ENCODE measurements at regions of chr17 and their contacts with region 1.

Region 1: GRCh38 chr17:49763735-49764558 is at the start of gene FAM117A:
- H3K4me3 ChIP-seq: peak within 1 kb of the TSS; percentile 73
- H3K27ac ChIP-seq: no peak within 1 kb of the TSS
- H3K4me1 ChIP-seq: peaks cover 9% of the 10 kb centered on the region; the same call in 1 of the 2 replicates
- CTCF ChIP-seq: no peak

Region 2: GRCh38 chr17:49646391-49647255 is 117.3 kb before region 1 on chr17:
- CTCF ChIA-PET with region 1: no interaction called
- POLR2A ChIA-PET with region 1: interaction called, 12 read pairs
- H3K4me3 ChIP-seq: no peak overlapping the region
- H3K27ac ChIP-seq: peak overlapping the region; percentile 39
- H3K4me1 ChIP-seq: peaks cover 8% of the 10 kb centered on the region
- CTCF ChIP-seq: no peak

Region 3: DNA sequence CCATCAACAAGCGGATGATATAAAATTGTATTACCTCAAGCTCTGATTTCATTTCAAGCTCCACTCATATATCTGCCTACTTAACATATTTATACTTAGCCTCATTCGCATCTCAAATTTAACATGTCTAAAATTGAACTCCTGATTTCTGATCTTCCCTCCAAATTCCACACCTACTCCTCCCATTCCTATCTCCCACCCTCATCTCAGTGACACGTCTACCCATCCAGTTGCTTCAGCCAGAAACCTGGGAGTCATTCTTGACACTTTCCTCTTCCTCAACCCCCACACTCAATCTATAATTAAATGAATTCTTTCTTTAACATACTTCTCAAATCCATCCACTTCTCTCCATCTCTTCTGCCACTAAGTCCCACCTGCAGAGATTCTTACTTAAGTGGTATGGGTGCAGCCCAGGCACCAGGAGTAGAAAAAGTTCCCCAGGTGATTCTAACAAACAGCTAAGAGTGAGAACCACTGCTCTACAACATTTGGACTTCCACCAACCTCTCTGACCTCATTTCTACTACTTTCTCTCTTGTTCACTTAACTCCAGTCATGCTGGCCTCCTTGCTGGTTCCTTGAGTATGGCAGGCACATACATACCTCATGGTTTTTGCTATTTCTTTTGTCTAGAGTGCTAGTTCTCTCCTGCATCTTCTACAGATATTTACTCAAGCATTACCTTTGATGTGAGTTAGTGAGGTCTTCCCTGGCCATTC is 104.1 kb before region 1 on chr17:
- CTCF ChIA-PET with region 1: no interaction called
- POLR2A ChIA-PET with region 1: no interaction called
- H3K4me3 ChIP-seq: no peak overlapping the region
- H3K27ac ChIP-seq: no peak overlapping the region
- H3K4me1 ChIP-seq: peaks cover 10% of the 10 kb centered on the region
- CTCF ChIP-seq: no peak

Region 4: GRCh38 chr17:49707608-49708514 is 56.1 kb before region 1 on chr17 and contains the start of gene SLC35B1:
- CTCF ChIA-PET with region 1: interaction called, 11 read pairs
- POLR2A ChIA-PET with region 1: interaction called, 67 read pairs
- H3K4me3 ChIP-seq: peak within 1 kb of the TSS; percentile 88
- H3K27ac ChIP-seq: peak within 1 kb of the TSS; percentile 93
- H3K4me1 ChIP-seq: no peaks in the 10 kb centered on the region
- CTCF ChIP-seq: peak; percentile 99

Region 5: DNA sequence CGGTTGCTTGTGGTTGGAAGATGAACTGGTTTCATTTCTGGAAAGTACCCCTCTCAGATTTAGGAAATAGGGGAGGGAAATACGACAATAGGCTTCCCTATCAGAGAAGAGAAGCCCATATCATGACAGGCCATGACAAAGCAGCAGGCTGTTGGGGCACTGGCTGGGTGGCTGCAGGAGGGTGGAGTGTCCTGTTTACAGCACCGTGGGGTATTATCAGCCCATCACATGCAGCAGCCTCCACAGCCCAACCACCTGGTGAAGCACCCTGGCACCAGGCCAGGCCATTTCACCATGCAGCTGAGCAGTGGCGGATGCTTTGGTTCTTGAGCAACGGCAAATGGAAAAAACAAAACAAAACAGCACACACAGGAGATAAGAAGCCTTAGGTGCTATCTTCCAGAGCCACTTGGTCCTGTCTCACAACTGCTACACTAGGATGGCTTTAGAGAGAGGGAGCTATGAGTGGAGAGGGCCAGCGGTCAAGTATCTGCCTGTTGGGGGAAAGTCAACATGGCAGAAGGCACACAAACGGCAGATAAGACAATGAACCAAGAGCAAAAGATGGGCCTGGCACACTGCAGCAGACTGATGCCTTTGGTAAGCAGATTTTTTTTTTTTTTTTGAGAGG is 24.2 kb before region 1 on chr17:
- CTCF ChIA-PET with region 1: no interaction called
- POLR2A ChIA-PET with region 1: interaction called, 27 read pairs
- H3K4me3 ChIP-seq: no peak overlapping the region
- H3K27ac ChIP-seq: no peak overlapping the region
- H3K4me1 ChIP-seq: no peaks in the 10 kb centered on the region
- CTCF ChIP-seq: no peak

Region 6: GRCh38 chr17:49788478-49789242 is 24.7 kb after region 1 on chr17 and contains the start of gene KAT7:
- CTCF ChIA-PET with region 1: interaction called, 3 read pairs
- POLR2A ChIA-PET with region 1: interaction called, 68 read pairs
- H3K4me3 ChIP-seq: peak within 1 kb of the TSS; percentile 93
- H3K27ac ChIP-seq: peak within 1 kb of the TSS; percentile 92
- H3K4me1 ChIP-seq: peaks cover 6% of the 10 kb centered on the region; the same call in 1 of the 2 replicates
- CTCF ChIP-seq: no peak

Region 7: GRCh38 chr17:49861150-49861892 is 97.4 kb after region 1 on chr17:
- CTCF ChIA-PET with region 1: no interaction called
- POLR2A ChIA-PET with region 1: no interaction called
- H3K4me3 ChIP-seq: no peak overlapping the region
- H3K27ac ChIP-seq: no peak overlapping the region
- H3K4me1 ChIP-seq: no peaks in the 10 kb centered on the region
- CTCF ChIP-seq: peak; percentile 89